ENCODE measurements at regions of chr5 and their contacts with region 1.

Region 1: GRCh38 chr5:932628-933250 is 40.1 kb downstream of the TRIP13 start:
- DNase-seq: no peak
- H3K4me3 ChIP-seq: no peak overlapping the region
- H3K27ac ChIP-seq: no peak overlapping the region
- H3K4me1 ChIP-seq: 0 out of 2 replicates have a peak, but pooled peaks cover 6% of the 10 kb centered on the region
- H3K27me3 ChIP-seq: peaks cover 46% of the 10 kb centered on the region
- CTCF ChIP-seq: no peak

Region 2: GRCh38 chr5:1011226-1011631 is 78.5 kb after region 1 on chr5:
- CTCF ChIA-PET with region 1: interaction called, 5 read pairs
- POLR2A ChIA-PET with region 1: no interaction called
- intact Hi-C with region 1: loop called (anchors 2 kb)
- DNase-seq: peak in 1 of 2 experiments; percentile 87
- H3K4me3 ChIP-seq: no peak overlapping the region
- H3K27ac ChIP-seq: no peak overlapping the region
- H3K4me1 ChIP-seq: no peaks in the 10 kb centered on the region
- H3K27me3 ChIP-seq: peaks cover 87% of the 10 kb centered on the region
- CTCF ChIP-seq: peak; percentile 88